ENCODE measurements at regions of chr19 and their contacts with region 1.

Region 1: DNA sequence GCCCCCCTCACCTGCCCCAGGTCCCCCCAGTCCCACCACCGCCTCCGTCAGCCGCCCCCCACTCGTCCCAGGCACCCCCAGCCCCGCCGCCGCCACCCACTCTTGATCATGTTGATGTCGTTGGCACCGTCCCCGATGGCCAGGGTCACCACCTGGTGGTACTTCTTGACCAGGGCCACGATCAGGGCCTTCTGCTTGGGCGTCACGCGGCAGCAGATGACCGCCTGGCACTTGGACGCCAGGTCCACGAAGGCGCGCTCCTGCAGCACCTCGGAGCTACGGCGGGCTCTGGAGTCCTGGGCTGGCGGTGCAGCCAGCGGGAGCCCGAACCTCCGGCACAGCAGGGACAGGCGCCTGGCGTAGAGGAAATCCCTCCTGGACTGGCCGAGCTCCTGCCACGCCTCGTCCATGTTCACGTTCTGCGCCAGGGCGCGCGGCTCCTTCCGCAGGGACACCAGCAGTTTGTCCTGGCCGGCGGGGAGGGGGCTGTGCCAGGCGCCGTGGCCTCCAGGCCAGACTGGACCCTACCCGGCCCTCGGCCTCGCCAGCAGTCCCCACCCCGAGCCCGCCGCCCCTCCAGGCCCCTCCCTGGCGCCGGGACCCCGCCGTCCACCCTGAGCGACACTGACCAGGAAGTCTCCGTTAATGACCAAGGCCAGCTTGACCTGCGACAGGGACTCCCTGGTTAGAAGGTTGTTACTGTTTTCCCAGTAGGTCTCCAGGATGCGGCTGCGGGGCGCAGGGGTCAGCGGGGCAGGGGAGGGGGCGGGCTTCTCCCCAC is 22.6 kb downstream of the ATP8B3 start:
- DNase-seq: no peak
- H3K4me3 ChIP-seq: peak overlapping the region in 9 of 59 donors; percentile 8 to 34 (median 17)
- H3K27ac ChIP-seq: no peak overlapping the region
- H3K27me3 ChIP-seq: peaks cover 0 to 54% (median 28%) of the 10 kb centered on the region in 45 donors
- CTCF ChIP-seq: no peak

Region 2: GRCh38 chr19:1540365-1540925 is 249.0 kb before region 1 on chr19:
- intact Hi-C with region 1: loop called in 1 of 2 experiments (anchors 10 kb)
- DNase-seq: peak in 2 of 10 donors; percentile 14 to 63
- H3K4me3 ChIP-seq: no peak overlapping the region
- H3K27ac ChIP-seq: peak overlapping the region in 15 of 59 donors; percentile 10 to 63 (median 32)
- H3K27me3 ChIP-seq: peaks cover 0 to 6% (median 0%) of the 10 kb centered on the region in 45 donors
- CTCF ChIP-seq: no peak